Psoas muscle (tissue), 8 donors: ENCODE measurements at regions of chr7 and their contacts with region 1.

Region 1: GRCh38 chr7:121054925-121055324 is 66.4 kb downstream of the CPED1 start:
- DNase-seq: no peak
- ATAC-seq: no peak
- H3K4me3 ChIP-seq: no peak overlapping the region
- H3K27ac ChIP-seq: no peak overlapping the region
- H3K4me1 ChIP-seq: peaks cover 35% of the 10 kb centered on the region
- H3K27me3 ChIP-seq: no peaks in the 10 kb centered on the region
- CTCF ChIP-seq: no peak

Region 2: DNA sequence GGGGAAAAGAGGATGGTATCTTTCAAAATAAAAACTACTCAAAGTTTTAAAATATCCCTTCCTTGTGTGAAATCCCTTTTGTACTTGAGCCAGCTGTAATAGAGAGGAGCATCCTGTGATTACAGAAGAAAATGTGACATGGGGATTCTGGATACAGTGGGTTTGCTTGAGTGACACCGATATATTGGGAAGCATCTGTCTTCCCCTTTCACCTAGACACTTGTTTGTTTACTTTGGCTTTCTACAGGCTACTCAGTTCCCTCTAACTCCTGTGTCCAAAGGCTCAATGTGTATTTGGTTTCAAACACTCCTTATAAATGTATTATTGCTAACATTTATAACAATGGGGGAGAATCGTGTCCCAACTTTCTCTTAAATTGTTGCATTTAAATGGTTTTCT is 42.0 kb before region 1 on chr7:
- intact Hi-C with region 1: loop called in 1 of 2 experiments (anchors 5 kb)
- DNase-seq: no peak
- ATAC-seq: peak; percentile 90 to 91 (median 91)
- H3K4me3 ChIP-seq: peak overlapping the region; percentile 35
- H3K27ac ChIP-seq: peak overlapping the region; percentile 90
- H3K4me1 ChIP-seq: peaks cover 60% of the 10 kb centered on the region
- H3K27me3 ChIP-seq: no peaks in the 10 kb centered on the region
- CTCF ChIP-seq: no peak